Activated naive CD4-positive, alpha-beta T cell treated with anti-CD3 and anti-CD28 coated beads for 36 hours (primary cell): ENCODE measurements at regions of chr17 and their contacts with region 1.

Region 1: DNA sequence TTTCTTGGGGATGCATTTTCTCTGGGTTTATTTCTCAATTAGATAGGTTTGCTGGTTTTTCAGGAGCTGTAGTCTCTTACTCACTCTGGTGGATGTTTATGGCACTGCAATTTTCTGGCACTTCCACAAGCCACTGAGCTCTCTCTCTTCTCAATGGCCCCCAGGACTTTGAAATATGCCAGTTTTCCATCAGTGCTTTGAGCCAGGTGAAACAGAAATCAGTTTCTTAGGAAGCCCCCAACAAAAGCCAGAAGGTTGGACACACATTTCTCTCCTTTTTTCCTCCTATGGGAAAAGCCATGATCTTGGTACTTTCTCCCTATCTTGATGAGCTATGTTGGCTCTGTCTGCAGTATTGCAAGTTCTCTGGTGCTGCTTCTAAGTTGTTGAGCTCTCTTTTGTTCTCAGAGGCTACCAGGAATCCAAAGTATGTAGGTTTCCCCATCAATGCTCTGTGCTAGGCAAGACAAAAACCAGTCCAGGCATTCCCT is 90.7 kb upstream of the SMIM36 start:
- DNase-seq: peak; percentile 54
- H3K4me3 Mint-ChIP-seq: no peak overlapping the region
- H3K27ac Mint-ChIP-seq: no peak overlapping the region
- H3K4me1 Mint-ChIP-seq: no peaks in the 10 kb centered on the region
- H3K27me3 Mint-ChIP-seq: peaks cover 3% of the 10 kb centered on the region

Region 2: DNA sequence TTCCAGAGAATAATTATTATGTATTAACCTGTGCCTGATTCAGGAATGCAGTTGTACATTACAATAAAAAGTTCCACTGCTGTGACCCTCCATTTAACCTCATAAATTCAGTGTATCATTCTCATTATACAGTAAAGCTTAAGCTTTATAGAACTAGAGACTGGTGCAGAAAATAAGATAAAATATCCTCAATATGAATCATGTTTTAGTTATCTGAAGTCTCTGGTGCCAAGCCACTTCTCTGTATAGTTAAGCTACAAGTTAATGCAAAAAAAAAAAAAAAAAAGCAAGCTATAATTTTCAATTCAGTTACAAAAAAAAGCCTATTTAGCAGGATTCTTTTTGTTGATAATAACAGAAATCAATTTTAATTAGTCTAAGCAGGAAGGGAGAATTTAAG is 68.3 kb before region 1 on chr17:
- CTCF ChIA-PET with region 1: interaction called, 155 read pairs
- intact Hi-C with region 1: no loop called
- DNase-seq: no peak
- H3K4me3 Mint-ChIP-seq: no peak overlapping the region
- H3K27ac Mint-ChIP-seq: no peak overlapping the region
- H3K4me1 Mint-ChIP-seq: no peaks in the 10 kb centered on the region
- H3K27me3 Mint-ChIP-seq: peaks cover 2% of the 10 kb centered on the region

Region 3: GRCh38 chr17:55588446-55589242 is 13.3 kb before region 1 on chr17:
- CTCF ChIA-PET with region 1: interaction called, 12 read pairs
- intact Hi-C with region 1: no loop called
- DNase-seq: no peak
- H3K4me3 Mint-ChIP-seq: no peak overlapping the region
- H3K27ac Mint-ChIP-seq: no peak overlapping the region
- H3K4me1 Mint-ChIP-seq: peaks cover 10% of the 10 kb centered on the region
- H3K27me3 Mint-ChIP-seq: no peaks in the 10 kb centered on the region

Region 4: GRCh38 chr17:55652830-55653229 is 50.9 kb after region 1 on chr17:
- CTCF ChIA-PET with region 1: no interaction called
- intact Hi-C with region 1: no loop called
- DNase-seq: no peak
- H3K4me3 Mint-ChIP-seq: no peak overlapping the region
- H3K27ac Mint-ChIP-seq: no peak overlapping the region
- H3K4me1 Mint-ChIP-seq: no peaks in the 10 kb centered on the region
- H3K27me3 Mint-ChIP-seq: peaks cover 23% of the 10 kb centered on the region

Region 5: GRCh38 chr17:55673743-55674506 is 72.0 kb after region 1 on chr17:
- CTCF ChIA-PET with region 1: no interaction called
- intact Hi-C with region 1: no loop called
- DNase-seq: no peak
- H3K4me3 Mint-ChIP-seq: no peak overlapping the region
- H3K27ac Mint-ChIP-seq: no peak overlapping the region
- H3K4me1 Mint-ChIP-seq: peaks cover 9% of the 10 kb centered on the region
- H3K27me3 Mint-ChIP-seq: peaks cover 40% of the 10 kb centered on the region

Region 6: DNA sequence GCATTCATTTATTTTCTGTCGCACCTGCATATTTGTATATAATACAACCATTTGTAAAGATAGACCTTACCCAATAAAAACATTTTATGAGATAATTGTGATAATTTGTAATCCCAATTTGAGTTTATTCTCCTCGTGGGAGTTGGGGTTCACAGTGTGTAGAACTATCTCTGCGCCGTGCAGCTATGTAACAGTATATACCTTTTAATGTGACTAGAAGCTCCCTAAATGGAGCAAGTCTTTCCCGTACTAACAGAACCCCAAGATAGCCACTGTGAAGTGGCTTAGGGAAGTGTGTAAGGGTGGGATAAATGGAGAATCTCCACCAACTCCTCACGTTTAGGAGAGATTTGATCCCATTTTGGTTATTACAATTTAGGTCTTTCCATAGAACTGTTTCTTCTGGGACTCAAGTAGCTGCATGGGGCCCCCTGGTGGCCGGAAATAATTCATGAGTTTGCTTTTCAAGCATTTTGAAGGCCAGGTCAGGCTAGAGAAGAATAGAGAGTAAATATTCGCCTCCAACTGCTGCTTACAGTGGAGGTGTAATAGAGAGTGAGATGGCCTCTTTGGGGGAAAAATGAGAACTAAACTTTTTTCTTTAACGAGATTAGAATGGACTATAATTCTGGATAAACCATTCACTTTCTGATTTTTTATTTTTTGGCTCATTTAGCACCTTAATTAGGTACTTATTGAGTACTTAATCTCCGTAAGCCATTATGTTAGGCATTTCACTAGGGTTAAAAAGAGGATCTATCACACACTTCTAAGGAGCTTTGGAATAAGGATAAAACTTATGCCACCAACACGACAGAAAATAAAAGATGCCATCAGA is 116.2 kb after region 1 on chr17:
- CTCF ChIA-PET with region 1: interaction called, 25 read pairs
- intact Hi-C with region 1: loop called (anchors 2 kb)
- DNase-seq: peak; percentile 84
- H3K4me3 Mint-ChIP-seq: no peak overlapping the region
- H3K27ac Mint-ChIP-seq: no peak overlapping the region
- H3K4me1 Mint-ChIP-seq: peaks cover 2% of the 10 kb centered on the region
- H3K27me3 Mint-ChIP-seq: peaks cover 15% of the 10 kb centered on the region

Region 7: DNA sequence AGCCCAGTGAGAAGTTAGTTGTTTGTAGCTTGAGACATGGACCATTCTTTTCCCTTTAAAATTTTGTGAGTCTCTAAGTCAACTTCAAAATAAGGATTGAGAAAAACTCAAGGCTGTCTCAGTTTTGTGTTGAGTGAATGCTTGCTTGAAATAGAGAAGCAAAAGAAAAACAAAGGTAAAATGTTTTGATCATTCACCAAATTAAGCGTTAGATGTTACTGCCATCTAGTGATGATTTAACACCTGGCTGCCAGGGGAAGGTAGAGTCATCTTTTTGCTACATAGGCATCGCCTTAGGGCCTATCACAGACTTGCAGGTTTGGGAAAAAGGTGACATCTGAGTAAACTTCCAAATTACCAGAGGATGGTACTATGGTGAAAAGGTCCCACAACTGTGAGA is 223.3 kb after region 1 on chr17:
- CTCF ChIA-PET with region 1: interaction called, 10 read pairs
- intact Hi-C with region 1: no loop called
- DNase-seq: peak; percentile 18
- H3K4me3 Mint-ChIP-seq: no peak overlapping the region
- H3K27ac Mint-ChIP-seq: no peak overlapping the region
- H3K4me1 Mint-ChIP-seq: no peaks in the 10 kb centered on the region
- H3K27me3 Mint-ChIP-seq: peaks cover 8% of the 10 kb centered on the region